CD8-positive, alpha-beta T cell (primary cell): ENCODE measurements at regions of chr16 and their contacts with region 1.

Region 1: GRCh38 chr16:4846891-4847773 is at the starts of genes GLYR1 and UBN1:
- DNase-seq: peak; percentile 98 to 100 (median 100)
- ATAC-seq: peak; percentile 91
- H3K4me3 ChIP-seq: peak within 1 kb of the TSS; percentile 79 to 89
- H3K4me3 Mint-ChIP-seq: peak within 1 kb of the TSS; percentile 91
- H3K27ac ChIP-seq: peak within 1 kb of the TSS; percentile 92 to 95
- H3K27ac Mint-ChIP-seq: peak within 1 kb of the TSS; percentile 96
- H3K4me1 ChIP-seq: peaks cover 38% of the 10 kb centered on the region
- H3K4me1 Mint-ChIP-seq: peaks cover 60% of the 10 kb centered on the region
- H3K27me3 ChIP-seq: no peaks in the 10 kb centered on the region
- H3K27me3 Mint-ChIP-seq: no peaks in the 10 kb centered on the region
- CTCF ChIP-seq: no peak
- total RNA-seq, gene GLYR1: 71.8 to 76.7 TPM
- total RNA-seq, gene UBN1: 57.1 to 65.3 TPM

Region 2: DNA sequence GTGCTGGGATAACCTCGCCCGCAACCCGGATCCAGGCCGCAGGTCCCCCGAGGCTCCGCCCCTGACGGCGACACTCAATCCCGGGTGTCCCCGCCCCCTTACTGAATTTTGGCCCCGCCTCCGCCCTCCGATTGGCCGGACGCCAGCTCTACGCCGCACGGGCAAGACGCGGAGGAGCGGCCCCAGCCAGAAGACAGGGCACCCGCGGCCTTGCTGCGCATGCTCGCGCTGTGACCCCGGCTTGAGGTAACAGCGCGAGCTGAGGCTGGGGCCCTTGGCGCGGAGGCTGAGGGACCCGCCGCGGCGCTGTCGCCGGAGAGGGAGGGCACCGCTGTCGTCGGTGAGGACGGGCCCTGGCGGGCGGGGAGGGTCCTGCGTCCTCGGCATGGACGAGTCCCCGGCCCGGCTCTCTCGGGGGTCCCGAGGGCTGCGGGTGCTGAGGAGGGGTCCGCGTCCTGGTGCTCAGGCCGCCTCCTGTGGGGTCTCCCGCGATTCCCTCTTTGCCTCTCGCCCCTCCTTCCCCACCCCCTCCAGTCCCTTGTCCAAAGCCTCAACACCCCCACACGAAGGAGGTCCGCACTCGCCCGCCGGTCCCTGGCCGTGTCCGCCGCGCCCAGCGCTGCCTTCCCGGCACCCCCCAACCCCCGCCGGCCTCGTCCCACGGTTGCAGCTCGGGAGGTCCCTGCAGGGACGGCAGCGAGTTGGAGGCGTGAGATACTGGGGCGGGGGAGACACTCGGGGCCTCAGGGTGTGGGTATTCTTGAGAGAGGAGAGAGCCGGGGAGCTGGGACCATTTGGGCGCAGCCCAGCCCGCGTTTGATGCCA is 1963.9 kb before region 1 on chr16 and contains the start of gene FLYWCH2:
- CTCF ChIA-PET with region 1: no interaction called
- POLR2A ChIA-PET with region 1: no interaction called
- intact Hi-C with region 1: loop called in 1 of 2 experiments (anchors 5 kb)
- DNase-seq: peak; percentile 98 to 100 (median 99)
- ATAC-seq: peak; percentile 83
- H3K4me3 ChIP-seq: peak within 1 kb of the TSS; percentile 69 to 78
- H3K4me3 Mint-ChIP-seq: peak within 1 kb of the TSS; percentile 87
- H3K27ac ChIP-seq: peak within 1 kb of the TSS; percentile 90 to 94
- H3K27ac Mint-ChIP-seq: peak within 1 kb of the TSS; percentile 95
- H3K4me1 ChIP-seq: peaks cover 9% of the 10 kb centered on the region
- H3K4me1 Mint-ChIP-seq: peaks cover 17% of the 10 kb centered on the region
- H3K27me3 ChIP-seq: no peaks in the 10 kb centered on the region
- H3K27me3 Mint-ChIP-seq: no peaks in the 10 kb centered on the region
- CTCF ChIP-seq: no peak
- total RNA-seq, gene FLYWCH2: 9.3 to 10.9 TPM

Region 3: DNA sequence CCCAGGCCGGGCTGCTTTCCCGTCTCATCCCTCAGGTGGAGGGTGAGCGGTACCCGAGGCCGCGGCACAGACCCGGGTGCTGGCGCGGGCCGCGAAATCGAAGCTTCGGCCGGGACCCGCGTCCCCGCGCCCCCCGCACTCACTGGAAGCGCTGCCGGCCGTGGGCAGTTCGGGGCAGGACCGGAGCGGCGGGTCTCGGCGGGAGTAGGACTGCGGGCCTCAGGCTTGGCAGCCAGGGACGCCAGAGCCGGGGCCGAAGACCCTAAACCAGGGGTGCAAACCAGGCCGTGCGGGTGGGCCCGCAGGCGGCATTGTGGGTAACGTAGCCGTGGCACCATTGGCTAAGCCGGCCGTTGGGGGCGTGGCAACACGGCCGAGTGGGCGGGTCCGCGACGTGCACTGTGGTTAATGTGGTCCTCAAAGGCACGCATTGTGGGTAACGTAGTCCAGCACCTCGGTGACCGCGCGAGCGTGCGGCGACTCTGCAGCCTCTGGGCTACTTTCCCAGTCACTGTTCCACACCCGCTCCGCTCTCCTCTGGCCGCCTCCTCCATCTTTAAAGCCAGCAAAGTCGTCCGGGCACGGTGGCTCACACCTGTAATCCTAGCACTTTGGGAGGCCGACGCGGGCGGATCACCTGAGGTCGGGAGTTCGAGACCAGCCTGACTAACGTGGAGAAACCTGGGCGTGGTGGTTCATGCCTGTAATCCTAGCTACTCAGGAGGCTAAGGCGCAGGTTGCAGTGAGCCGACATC is 80.1 kb before region 1 on chr16 and contains the start of gene ZNF500:
- CTCF ChIA-PET with region 1: no interaction called
- POLR2A ChIA-PET with region 1: no interaction called
- intact Hi-C with region 1: loop called (anchors 1 kb)
- DNase-seq: peak; percentile 89 to 98 (median 96)
- ATAC-seq: peak; percentile 90
- H3K4me3 ChIP-seq: peak within 1 kb of the TSS; percentile 77 to 83
- H3K4me3 Mint-ChIP-seq: peak within 1 kb of the TSS; percentile 91
- H3K27ac ChIP-seq: peak within 1 kb of the TSS; percentile 67 to 77
- H3K27ac Mint-ChIP-seq: peak within 1 kb of the TSS; percentile 81
- H3K4me1 ChIP-seq: peaks cover 22% of the 10 kb centered on the region
- H3K4me1 Mint-ChIP-seq: peaks cover 45% of the 10 kb centered on the region
- H3K27me3 ChIP-seq: no peaks in the 10 kb centered on the region
- H3K27me3 Mint-ChIP-seq: no peaks in the 10 kb centered on the region
- CTCF ChIP-seq: no peak
- total RNA-seq, gene ZNF500: 12.1 to 15.9 TPM

Region 4: GRCh38 chr16:4814542-4815173 is 32.5 kb before region 1 on chr16:
- CTCF ChIA-PET with region 1: no interaction called
- POLR2A ChIA-PET with region 1: no interaction called
- intact Hi-C with region 1: loop called in 1 of 2 experiments (anchors 1 kb)
- DNase-seq: no peak
- ATAC-seq: no peak
- H3K4me3 ChIP-seq: no peak overlapping the region
- H3K4me3 Mint-ChIP-seq: no peak overlapping the region
- H3K27ac ChIP-seq: no peak overlapping the region
- H3K27ac Mint-ChIP-seq: no peak overlapping the region
- H3K4me1 ChIP-seq: no peaks in the 10 kb centered on the region
- H3K4me1 Mint-ChIP-seq: no peaks in the 10 kb centered on the region
- H3K27me3 ChIP-seq: no peaks in the 10 kb centered on the region
- H3K27me3 Mint-ChIP-seq: no peaks in the 10 kb centered on the region
- CTCF ChIP-seq: no peak

Region 5: DNA sequence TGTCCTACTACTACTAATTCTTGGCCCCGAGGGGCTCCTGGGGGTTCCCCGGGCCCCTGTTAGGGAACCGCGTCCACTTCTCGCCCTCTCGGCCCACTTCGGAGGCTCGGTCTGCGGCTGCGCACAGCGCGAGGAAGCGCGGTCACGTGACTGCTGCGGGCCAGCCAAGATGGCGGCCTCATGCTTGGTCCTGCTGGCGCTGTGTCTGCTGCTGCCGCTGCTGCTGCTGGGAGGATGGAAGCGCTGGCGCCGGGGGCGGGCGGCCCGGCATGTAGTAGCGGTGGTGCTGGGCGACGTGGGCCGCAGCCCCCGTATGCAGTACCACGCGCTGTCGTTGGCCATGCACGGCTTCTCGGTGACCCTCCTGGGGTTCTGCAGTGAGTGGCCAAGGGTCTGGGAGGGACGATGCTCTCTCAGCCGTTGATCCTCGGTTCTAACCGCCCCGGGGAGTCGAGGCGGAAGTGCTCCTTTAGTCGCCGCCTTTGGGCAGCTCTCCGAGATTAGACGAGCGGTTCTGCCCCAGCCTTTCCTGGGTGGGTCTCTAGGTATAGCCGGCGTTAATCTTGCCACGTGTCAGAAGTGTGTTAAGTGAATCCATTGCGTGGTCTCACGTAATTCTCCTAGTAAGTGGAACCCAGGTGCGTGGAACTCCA is 224.7 kb after region 1 on chr16 and contains the start of gene ALG1:
- CTCF ChIA-PET with region 1: no interaction called
- POLR2A ChIA-PET with region 1: no interaction called
- intact Hi-C with region 1: loop called (anchors 5 kb)
- DNase-seq: peak; percentile 77 to 95 (median 91)
- ATAC-seq: peak; percentile 89
- H3K4me3 ChIP-seq: peak within 1 kb of the TSS; percentile 73
- H3K4me3 Mint-ChIP-seq: peak within 1 kb of the TSS; percentile 95
- H3K27ac ChIP-seq: peak within 1 kb of the TSS; percentile 74 to 91
- H3K27ac Mint-ChIP-seq: peak within 1 kb of the TSS; percentile 98
- H3K4me1 ChIP-seq: peaks cover 20% of the 10 kb centered on the region
- H3K4me1 Mint-ChIP-seq: peaks cover 27% of the 10 kb centered on the region
- H3K27me3 ChIP-seq: no peaks in the 10 kb centered on the region
- H3K27me3 Mint-ChIP-seq: no peaks in the 10 kb centered on the region
- CTCF ChIP-seq: no peak
- total RNA-seq, gene ALG1: 7.9 to 10.9 TPM